MCF 10A (cell line): ENCODE measurements at regions of chr20 and their contacts with region 1.

Region 1: GRCh38 chr20:18496740-18497592 is at the start of gene RBBP9:
- DNase-seq: peak; percentile 83
- H3K4me3 Mint-ChIP-seq: peak within 1 kb of the TSS; percentile 91
- H3K27ac Mint-ChIP-seq: peak within 1 kb of the TSS; percentile 87
- H3K4me1 Mint-ChIP-seq: no peaks in the 10 kb centered on the region
- H3K27me3 Mint-ChIP-seq: no peaks in the 10 kb centered on the region
- CTCF ChIP-seq: no peak
- total RNA-seq, gene RBBP9: 6.8 and 7.3 TPM in 2 replicates

Region 2: DNA sequence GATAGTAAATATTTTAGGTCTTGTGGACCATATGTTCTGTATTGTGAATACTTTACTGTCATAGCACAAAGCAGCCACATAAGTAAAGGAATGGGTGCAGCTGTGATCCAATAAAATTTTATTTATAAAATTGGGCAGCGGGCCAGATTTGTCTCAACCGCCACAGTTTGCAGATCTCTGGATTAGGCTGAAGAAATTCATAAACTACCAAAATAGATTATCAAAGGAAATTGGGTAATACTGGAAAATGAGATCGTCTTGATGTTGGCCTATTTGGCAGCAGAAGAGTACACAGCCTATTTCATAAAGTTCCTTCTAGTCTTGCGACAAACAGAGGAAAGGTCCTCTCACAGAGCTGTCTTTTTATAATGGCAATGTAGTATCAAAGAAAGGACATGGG is 99.9 kb before region 1 on chr20:
- CTCF ChIA-PET with region 1: no interaction called
- POLR2A ChIA-PET with region 1: no interaction called
- intact Hi-C with region 1: no loop called
- DNase-seq: no peak
- H3K4me3 Mint-ChIP-seq: no peak overlapping the region
- H3K27ac Mint-ChIP-seq: no peak overlapping the region
- H3K4me1 Mint-ChIP-seq: no peaks in the 10 kb centered on the region
- H3K27me3 Mint-ChIP-seq: no peaks in the 10 kb centered on the region
- CTCF ChIP-seq: no peak

Region 3: DNA sequence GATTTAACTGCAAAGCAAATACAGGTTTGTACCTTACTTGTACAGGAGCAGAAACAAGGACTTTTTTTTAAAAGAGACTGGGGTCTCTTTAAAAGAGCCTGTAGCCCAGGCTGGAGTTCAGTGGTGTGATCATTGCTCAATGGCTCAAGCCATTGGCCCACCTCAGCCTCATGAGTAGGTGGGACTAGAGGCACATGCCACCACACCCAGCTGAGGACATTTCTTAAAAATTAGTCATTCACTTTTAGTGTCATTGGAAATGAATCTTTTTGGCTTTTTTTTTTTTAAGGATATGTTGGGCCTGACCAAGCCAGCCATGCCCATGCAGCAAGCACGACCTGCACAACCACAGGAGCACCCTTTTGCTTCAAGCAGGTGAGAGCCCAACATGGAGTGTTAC is 27.7 kb after region 1 on chr20:
- CTCF ChIA-PET with region 1: no interaction called
- POLR2A ChIA-PET with region 1: interaction called, 11 read pairs
- intact Hi-C with region 1: no loop called
- DNase-seq: peak; percentile 65
- H3K4me3 Mint-ChIP-seq: peak overlapping the region; percentile 30
- H3K27ac Mint-ChIP-seq: no peak overlapping the region
- H3K4me1 Mint-ChIP-seq: peaks cover 14% of the 10 kb centered on the region
- H3K27me3 Mint-ChIP-seq: no peaks in the 10 kb centered on the region
- CTCF ChIP-seq: no peak

Region 4: DNA sequence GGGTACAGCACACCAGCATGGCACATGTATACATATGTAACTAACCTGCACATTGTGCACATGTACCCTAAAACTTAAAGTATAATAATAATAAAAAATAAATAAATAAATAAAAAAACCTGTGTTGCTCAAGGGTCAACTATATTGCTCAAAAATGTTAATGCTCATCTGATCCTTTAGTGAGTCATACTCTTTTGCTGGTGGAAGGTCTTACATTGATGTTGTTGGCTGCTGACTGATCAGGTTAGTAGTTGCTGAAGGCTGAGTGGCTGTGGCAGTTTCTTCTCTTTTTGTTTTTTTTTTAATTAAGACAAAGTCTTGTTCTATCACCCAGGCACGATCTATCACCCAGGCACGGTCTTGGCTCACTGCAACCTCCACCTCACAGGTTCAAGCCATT is 40.7 kb after region 1 on chr20:
- CTCF ChIA-PET with region 1: no interaction called
- POLR2A ChIA-PET with region 1: no interaction called
- intact Hi-C with region 1: no loop called
- DNase-seq: peak; percentile 27
- H3K4me3 Mint-ChIP-seq: no peak overlapping the region
- H3K27ac Mint-ChIP-seq: no peak overlapping the region
- H3K4me1 Mint-ChIP-seq: peaks cover 7% of the 10 kb centered on the region
- H3K27me3 Mint-ChIP-seq: no peaks in the 10 kb centered on the region
- CTCF ChIP-seq: no peak

Region 5: DNA sequence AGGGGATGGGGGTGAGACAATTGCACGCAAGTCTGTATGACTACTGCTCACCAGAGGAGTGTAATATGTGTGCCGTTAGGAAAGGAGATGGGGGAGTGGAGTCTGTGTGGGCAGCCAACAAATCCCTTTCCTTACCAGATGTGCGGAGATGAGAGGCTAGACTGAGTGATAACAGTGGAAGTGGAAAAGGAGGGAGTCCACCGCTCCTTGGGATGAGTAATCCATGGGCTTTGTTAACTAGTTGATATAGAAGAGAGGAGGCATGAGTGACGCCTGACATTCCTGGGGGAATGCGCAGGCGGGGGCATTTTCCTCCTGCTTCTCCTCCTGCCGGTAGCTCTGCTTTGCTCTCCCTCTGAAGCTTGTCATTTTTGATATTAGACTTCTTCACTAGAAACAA is 56.8 kb after region 1 on chr20:
- CTCF ChIA-PET with region 1: no interaction called
- POLR2A ChIA-PET with region 1: no interaction called
- intact Hi-C with region 1: no loop called
- DNase-seq: no peak
- H3K4me3 Mint-ChIP-seq: no peak overlapping the region
- H3K27ac Mint-ChIP-seq: no peak overlapping the region
- H3K4me1 Mint-ChIP-seq: no peaks in the 10 kb centered on the region
- H3K27me3 Mint-ChIP-seq: no peaks in the 10 kb centered on the region
- CTCF ChIP-seq: no peak

Region 6: DNA sequence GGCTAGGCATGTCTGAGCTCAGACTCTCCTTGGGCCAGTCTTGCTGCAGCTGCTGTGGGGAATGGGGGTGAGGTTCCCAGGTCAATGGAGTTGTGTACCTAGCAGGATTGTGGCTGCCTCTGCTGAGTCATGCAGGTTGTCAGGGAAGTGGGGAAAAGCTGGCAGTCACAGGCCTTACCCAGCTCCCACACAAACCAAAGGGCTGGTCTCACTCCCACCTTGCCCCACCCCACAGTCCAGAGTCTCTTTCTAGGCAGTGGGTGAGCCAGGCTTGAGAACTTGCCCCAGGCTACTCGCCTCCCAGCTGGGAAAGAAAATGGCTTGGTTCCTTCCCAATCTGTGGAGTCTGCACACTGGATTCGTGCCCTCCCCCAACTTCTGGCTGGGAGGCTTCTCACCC is 382.3 kb after region 1 on chr20:
- CTCF ChIA-PET with region 1: no interaction called
- POLR2A ChIA-PET with region 1: no interaction called
- intact Hi-C with region 1: no loop called
- DNase-seq: peak; percentile 93
- H3K4me3 Mint-ChIP-seq: no peak overlapping the region
- H3K27ac Mint-ChIP-seq: peak overlapping the region; percentile 86
- H3K4me1 Mint-ChIP-seq: peaks cover 21% of the 10 kb centered on the region
- H3K27me3 Mint-ChIP-seq: no peaks in the 10 kb centered on the region
- CTCF ChIP-seq: no peak